ENCODE measurements at regions of chr9 and their contacts with region 1.

Region 1: GRCh38 chr9:2060424-2060823 is 45.3 kb downstream of the SMARCA2 start:
- DNase-seq: no peak
- ATAC-seq: peak; percentile 75 to 92

Region 2: DNA sequence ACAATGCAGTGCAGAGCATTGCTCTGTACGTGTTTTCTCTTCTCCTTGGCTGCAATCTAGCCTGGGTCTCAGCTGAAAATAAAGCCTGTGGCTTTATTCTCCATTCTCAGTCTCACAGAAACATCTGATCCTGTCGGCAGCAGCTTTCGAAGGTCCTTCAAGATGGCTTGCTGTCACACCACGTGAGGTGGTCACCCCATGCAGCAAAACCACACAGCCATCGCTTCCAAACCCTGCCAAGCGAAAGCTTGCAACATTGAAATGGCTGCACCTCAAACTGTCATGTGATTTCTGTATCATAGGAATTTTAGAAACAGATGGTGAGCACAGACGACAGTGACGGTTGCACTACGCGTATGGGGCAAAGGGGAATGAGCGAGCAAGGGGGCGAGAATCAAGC is 143.8 kb before region 1 on chr9:
- intact Hi-C with region 1: no loop called
- DNase-seq: no peak
- ATAC-seq: peak in 1 of 2 donors; percentile 70

Region 3: DNA sequence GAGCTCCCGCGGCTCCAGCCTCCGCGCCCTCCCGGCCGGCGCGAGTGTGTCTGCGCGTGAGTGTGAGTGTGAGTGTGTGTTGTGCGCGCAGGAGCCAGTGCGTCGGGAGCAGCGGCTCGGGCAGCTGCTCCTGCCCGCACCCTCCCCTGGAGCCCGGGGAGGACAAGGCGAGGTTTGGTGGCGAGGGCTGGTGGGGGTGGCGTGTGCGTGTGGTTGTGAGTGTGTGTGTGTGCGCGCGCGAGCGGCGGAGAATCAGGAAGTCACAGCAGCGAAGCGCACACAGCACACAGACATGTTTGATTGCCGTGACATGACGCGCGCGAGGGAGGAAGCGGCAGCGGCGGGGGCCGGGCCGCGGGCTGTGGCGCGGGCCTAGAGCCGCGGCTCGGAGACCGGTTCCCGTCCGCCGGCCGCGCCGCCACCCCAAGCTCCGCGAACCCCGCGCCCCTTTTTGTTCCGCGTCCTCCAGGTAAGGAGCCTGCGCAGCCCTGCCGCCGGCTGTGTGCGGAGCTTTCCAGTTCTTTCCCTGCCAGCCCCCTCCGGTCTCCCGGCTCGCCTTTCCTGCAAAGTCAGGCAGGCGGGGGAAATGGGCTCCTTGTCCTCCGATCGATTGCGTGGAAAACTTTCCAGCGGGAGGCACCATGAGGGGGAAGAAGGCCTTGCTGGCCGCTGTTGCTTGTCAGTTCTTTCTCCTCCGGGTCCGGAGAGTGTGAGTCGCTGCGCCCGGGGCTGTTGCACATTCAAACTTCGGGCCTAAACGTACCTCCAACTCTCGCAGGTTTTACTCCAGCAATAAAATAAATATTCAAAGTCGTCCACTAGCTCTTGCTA is 42.9 kb before region 1 on chr9:
- intact Hi-C with region 1: loop called in 1 of 2 experiments (anchors 2 kb)
- DNase-seq: peak; percentile 84
- ATAC-seq: peak; percentile 38 to 45